HEK293 (cell line): ENCODE measurements at regions of chr1 and their contacts with region 1.

Region 1: GRCh38 chr1:54287176-54287650 is 87.2 kb downstream of the MRPL37 start:
- H3K4me3 ChIP-seq: no peak overlapping the region
- H3K27ac ChIP-seq: peak overlapping the region; percentile 43; the same call in 1 of the 2 replicates
- H3K4me1 ChIP-seq: peaks cover 10% of the 10 kb centered on the region
- CTCF ChIP-seq: no peak

Region 2: DNA sequence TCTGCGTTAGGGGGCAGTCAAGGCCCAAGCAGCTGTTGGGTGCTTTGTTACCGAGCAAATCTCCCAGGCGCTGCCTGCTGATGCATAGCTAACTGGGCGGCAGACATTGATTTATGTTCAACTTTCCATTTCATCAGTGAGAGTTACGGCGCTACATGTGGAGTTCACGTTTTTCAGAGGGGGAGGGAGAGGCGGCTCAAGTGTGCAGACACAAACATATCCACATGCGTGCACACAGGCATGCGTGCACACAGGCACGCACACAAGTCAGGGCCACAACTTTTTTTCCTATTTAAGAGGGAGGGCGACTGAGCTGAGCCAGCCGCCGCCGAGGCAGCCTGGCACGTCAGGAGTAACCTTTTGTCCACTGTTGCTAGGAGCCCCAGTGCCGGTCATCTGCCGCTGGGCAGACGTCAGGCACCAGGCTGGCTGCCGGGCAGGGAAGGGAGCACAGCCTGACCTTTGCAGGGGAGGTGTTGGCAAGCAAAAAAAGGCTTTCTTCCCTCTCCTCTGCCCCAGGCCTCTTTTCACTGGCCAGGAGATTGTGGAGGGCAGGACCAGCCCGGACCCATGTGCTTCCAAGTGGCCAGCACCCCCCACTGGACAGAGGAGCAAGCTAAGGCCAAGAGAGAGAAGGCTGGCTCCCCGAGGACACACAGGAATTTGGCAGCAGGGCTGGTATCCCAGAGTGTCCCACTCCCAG is 14.0 kb before region 1 on chr1:
- CTCF ChIA-PET with region 1: interaction called, 3 read pairs
- POLR2A ChIA-PET with region 1: interaction called, 14 read pairs
- H3K4me3 ChIP-seq: no peak overlapping the region
- H3K27ac ChIP-seq: no peak overlapping the region
- H3K4me1 ChIP-seq: no peaks in the 10 kb centered on the region
- CTCF ChIP-seq: peak; percentile 84

Region 3: DNA sequence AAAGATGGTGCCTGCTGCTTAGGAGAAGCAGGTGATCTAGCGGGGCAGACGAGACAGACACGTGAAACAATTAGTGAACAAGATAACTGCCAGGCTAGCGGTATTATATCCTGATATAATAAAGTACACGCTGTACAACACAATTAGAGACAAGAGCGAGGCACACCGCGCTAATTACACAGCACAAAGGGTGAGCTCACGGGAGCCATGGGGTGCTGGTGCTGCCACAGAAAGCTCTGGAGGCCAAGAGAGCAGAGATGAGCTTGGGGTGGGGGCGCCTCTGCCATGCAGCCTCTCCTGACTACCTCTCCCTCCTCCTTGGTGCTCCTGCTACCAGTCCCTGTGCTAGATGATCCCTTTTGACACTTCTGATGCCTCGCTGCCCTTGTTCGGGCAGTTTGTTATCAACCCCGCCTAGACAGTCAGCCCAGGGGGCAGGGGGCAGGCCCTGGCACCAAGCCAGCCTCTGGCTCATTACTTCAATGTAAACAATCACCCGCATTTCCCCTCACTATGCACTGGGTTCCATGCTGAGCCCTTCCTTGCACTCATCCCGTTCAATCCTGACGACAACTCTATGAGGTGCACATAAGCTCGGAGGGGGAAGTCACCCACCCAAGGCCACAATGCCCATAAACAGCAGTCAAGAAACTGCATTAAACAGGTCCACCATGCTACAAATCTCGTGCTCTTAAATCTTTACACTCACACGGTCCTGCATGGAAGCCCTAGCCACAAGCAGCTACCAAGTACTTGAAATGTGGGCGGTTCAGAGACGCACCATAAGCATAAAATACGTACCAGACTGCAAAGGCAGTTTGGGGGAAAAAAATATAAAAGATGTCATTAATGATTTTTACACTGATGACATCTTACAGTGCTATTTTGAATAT is 16.0 kb after region 1 on chr1:
- CTCF ChIA-PET with region 1: no interaction called
- POLR2A ChIA-PET with region 1: no interaction called
- H3K4me3 ChIP-seq: no peak overlapping the region
- H3K27ac ChIP-seq: no peak overlapping the region
- H3K4me1 ChIP-seq: peaks cover 11% of the 10 kb centered on the region; the same call in 1 of the 2 replicates
- CTCF ChIP-seq: no peak